SK-N-SH (cell line): ENCODE measurements at regions of chr20 and their contacts with region 1.

Region 1: DNA sequence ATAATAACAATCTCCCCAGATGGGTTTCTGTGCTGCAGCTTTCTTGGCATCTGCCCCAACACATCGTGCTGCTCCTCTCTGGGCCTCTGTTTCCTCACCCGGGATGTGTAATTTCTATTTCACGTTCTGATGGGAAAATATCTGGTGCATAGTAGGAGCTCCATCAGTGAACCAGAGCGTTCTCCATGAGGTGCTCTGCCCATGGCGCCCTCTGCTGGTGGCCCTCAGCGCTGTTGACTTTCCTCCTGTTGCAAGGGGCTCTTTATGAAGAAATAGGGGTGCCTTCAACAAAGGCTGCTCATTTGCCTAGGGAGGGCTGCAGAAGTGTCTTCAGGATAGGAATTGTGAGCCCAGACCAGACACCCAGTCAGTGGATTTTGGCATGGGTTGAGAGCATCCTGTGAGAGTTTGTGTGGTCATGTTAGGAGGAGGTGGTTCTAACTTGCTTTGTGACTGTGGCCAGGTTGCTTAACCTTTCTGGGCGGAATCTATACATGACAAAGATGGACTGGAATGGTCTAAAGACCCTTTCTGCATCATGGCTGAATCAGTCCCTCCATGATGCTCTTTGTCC is 8.1 kb downstream of the SCRT2 start:
- DNase-seq: peak; percentile 79
- H3K4me3 ChIP-seq: peak overlapping the region in 1 of 2 experiments; percentile 17; a peak in 1 of 4 replicates
- H3K27ac ChIP-seq: no peak overlapping the region
- H3K4me1 ChIP-seq: no peaks in the 10 kb centered on the region; a peak in 1 of 4 replicates
- H3K27me3 ChIP-seq: no peaks in the 10 kb centered on the region
- CTCF ChIP-seq: peak; percentile 86
- EP300 ChIP-seq: no peak
- RAD21 ChIP-seq: peak; percentile 56

Region 2: DNA sequence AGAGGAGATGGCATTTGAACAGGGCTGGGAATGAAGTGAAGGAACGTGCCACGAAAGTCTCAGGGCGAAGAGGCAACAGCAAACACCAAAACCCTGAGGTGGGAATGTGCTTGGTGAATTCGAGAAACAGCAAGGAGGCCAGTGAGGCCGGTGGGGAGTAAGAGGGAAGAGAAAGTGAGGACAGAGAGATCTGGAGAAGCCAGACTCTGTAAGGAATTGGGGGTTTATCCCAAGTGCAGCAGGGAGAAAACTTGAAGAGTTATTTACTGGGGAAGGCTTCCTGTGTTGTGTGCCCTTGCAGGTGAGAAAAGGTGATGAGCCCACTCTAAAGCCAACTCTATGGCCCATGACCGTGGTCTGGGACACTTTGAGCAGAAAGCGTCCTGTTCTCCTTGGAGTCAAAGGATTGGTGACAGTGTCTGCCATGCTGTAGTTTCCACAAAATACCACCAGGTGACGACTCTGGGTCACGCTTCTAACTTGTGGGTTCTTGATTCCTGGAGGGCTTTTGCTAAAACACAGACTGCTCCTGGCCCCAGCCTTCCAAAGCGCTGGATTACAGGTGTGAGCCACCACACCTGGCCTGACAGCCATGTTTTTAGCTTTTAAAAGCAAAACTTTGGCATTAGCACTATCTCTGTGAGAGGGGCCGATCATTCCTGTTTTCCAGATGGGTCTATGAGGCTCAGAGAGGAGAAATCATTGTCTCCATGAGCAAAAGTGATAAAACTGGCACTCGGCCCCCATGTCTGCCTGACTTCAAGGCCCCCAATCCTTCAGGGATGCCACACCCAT is 105.8 kb before region 1 on chr20:
- CTCF ChIA-PET with region 1: interaction called, 20 read pairs
- POLR2A ChIA-PET with region 1: no interaction called
- DNase-seq: peak; percentile 83
- H3K4me3 ChIP-seq: no peak overlapping the region; a peak in 1 of 4 replicates
- H3K27ac ChIP-seq: no peak overlapping the region
- H3K4me1 ChIP-seq: no peaks in the 10 kb centered on the region
- H3K27me3 ChIP-seq: peaks cover 13% of the 10 kb centered on the region
- CTCF ChIP-seq: peak; percentile 94
- EP300 ChIP-seq: no peak
- RAD21 ChIP-seq: peak; percentile 95

Region 3: GRCh38 chr20:653110-653589 is 14.3 kb before region 1 on chr20 and contains the start of gene SRXN1:
- CTCF ChIA-PET with region 1: interaction called, 23 read pairs
- POLR2A ChIA-PET with region 1: no interaction called
- DNase-seq: peak; percentile 97
- H3K4me3 ChIP-seq: peak within 1 kb of the TSS; percentile 71 to 89
- H3K27ac ChIP-seq: peak within 1 kb of the TSS; percentile 53 to 68; a peak in 3 of 4 replicates
- H3K4me1 ChIP-seq: peaks cover 0 to 17% of the 10 kb centered on the region in 2 experiments; a peak in 2 of 4 replicates
- H3K27me3 ChIP-seq: no peaks in the 10 kb centered on the region
- CTCF ChIP-seq: peak; percentile 53
- EP300 ChIP-seq: no peak
- RAD21 ChIP-seq: peak; percentile 60
- polyA plus RNA-seq, gene SRXN1: 26.2 and 36.0 TPM in 2 replicates

Region 4: DNA sequence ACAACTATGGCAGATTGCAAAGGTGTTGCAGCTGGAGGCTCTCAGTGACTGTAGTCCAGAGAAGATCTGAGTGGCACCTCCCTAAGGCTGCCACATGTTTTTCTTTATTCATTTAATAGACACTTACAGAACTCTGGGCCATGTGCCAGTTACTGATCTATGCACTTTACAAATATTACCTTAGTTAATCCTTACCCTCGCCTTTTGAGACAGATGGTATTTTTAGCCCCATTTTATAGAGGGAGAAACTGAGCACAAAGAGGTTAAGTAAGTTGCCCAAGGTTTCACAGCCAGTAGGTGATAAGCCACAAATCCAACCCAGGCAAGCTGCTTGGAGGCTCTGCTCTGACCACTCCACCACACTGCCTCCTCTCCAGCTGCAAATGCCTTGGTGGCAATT is 14.6 kb after region 1 on chr20:
- CTCF ChIA-PET with region 1: interaction called, 17 read pairs
- POLR2A ChIA-PET with region 1: no interaction called
- DNase-seq: no peak
- H3K4me3 ChIP-seq: no peak overlapping the region
- H3K27ac ChIP-seq: no peak overlapping the region
- H3K4me1 ChIP-seq: peaks cover 0 to 6% of the 10 kb centered on the region in 2 experiments; a peak in 1 of 4 replicates
- H3K27me3 ChIP-seq: peaks cover 2% of the 10 kb centered on the region; the same call in 1 of the 2 replicates
- CTCF ChIP-seq: no peak
- EP300 ChIP-seq: no peak
- RAD21 ChIP-seq: no peak

Region 5: GRCh38 chr20:688809-689212 is 21.3 kb after region 1 on chr20:
- CTCF ChIA-PET with region 1: interaction called, 11 read pairs
- POLR2A ChIA-PET with region 1: no interaction called
- DNase-seq: peak; percentile 54
- H3K4me3 ChIP-seq: no peak overlapping the region
- H3K27ac ChIP-seq: no peak overlapping the region
- H3K4me1 ChIP-seq: no peaks in the 10 kb centered on the region; a peak in 1 of 4 replicates
- H3K27me3 ChIP-seq: no peaks in the 10 kb centered on the region; the same call in 1 of the 2 replicates
- CTCF ChIP-seq: no peak
- EP300 ChIP-seq: no peak
- RAD21 ChIP-seq: no peak

Region 6: GRCh38 chr20:699811-700338 is 32.4 kb after region 1 on chr20:
- CTCF ChIA-PET with region 1: interaction called, 14 read pairs
- POLR2A ChIA-PET with region 1: interaction called, 4 read pairs
- DNase-seq: peak; percentile 92
- H3K4me3 ChIP-seq: no peak overlapping the region
- H3K27ac ChIP-seq: peak overlapping the region in 1 of 2 experiments; percentile 90; a peak in 2 of 4 replicates
- H3K4me1 ChIP-seq: peaks cover 0 to 24% of the 10 kb centered on the region in 2 experiments; a peak in 1 of 4 replicates
- H3K27me3 ChIP-seq: peaks cover 9% of the 10 kb centered on the region; the same call in 1 of the 2 replicates
- CTCF ChIP-seq: no peak
- EP300 ChIP-seq: peak in 1 of 2 experiments; percentile 83; a peak in 2 of 4 replicates
- RAD21 ChIP-seq: peak; percentile 25

Region 7: DNA sequence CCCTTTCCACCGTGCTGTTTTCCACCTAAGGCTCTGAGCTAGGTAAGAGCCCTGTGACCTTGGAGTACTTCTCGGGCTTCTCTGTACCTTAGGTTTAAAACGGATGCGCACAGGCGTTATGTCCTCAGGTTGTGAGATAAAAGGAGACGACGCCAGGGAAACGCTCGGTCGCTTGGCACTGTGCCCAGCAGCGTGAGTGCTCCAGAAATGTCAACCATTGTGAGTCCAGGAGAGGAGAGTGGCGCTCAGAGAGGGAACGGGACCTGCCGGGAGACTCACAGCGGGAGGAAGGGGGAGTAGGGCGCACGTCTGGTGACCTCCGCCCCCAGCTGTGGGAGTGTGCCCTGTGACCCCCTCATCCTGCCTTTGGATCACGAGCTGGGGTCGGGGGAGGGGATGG is 41.9 kb after region 1 on chr20:
- CTCF ChIA-PET with region 1: interaction called, 14 read pairs
- POLR2A ChIA-PET with region 1: no interaction called
- DNase-seq: peak; percentile 71
- H3K4me3 ChIP-seq: peak overlapping the region in 1 of 2 experiments; percentile 34; a peak in 1 of 4 replicates
- H3K27ac ChIP-seq: no peak overlapping the region; a peak in 1 of 4 replicates
- H3K4me1 ChIP-seq: peaks cover 0 to 7% of the 10 kb centered on the region in 2 experiments; a peak in 1 of 4 replicates
- H3K27me3 ChIP-seq: peaks cover 8% of the 10 kb centered on the region; the same call in 1 of the 2 replicates
- CTCF ChIP-seq: no peak
- EP300 ChIP-seq: no peak
- RAD21 ChIP-seq: no peak